ENCODE measurements at regions of chr16 and their contacts with region 1.

Region 1: DNA sequence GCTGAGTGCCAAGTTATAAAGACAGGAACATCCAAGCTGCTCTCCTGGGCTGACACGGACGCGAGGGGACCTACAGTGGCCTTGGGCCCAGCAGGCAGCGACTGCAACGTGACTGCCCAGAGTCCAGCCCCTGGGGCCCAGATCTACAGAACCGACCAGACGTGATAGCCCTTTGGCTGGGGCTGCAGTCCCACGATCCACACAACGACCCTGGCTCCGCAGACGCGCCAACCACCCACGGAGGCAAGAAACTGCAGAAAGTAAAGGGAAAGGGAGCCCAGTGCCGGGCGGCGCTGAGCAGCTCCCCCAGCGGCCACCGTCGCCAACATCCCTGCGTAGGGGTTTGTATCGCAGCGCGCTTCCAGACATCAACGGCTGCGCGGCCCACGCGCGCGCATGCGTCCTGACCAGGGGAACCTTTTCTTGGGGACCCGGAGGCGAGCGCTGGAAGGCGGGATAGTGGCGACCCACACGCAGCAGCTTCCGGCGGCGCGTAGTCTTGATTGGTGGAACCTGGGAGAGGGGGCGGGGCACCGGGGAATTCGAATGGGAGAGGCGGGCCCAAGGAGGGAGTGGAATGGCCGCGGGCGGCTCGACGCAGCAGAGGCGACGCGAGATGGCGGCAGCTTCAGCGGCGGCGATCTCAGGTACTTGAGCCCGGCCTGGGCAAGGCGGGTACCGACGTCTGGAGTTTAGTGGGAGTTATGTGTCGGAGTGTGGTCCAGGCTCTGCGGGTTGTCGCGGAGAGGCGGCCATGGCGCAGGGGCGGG is at the start of gene KIF22:
- DNase-seq: peak; percentile 99 to 100 (median 100)
- ATAC-seq: peak; percentile 95
- H3K4me3 ChIP-seq: peak within 1 kb of the TSS; percentile 81 to 94
- H3K4me3 Mint-ChIP-seq: peak within 1 kb of the TSS; percentile 99
- H3K27ac ChIP-seq: peak within 1 kb of the TSS; percentile 78 to 80
- H3K27ac Mint-ChIP-seq: peak within 1 kb of the TSS; percentile 95
- H3K4me1 ChIP-seq: peaks cover 30% of the 10 kb centered on the region
- H3K4me1 Mint-ChIP-seq: peaks cover 41% of the 10 kb centered on the region
- H3K27me3 ChIP-seq: no peaks in the 10 kb centered on the region
- H3K27me3 Mint-ChIP-seq: no peaks in the 10 kb centered on the region
- CTCF ChIP-seq: peak; percentile 67
- total RNA-seq, gene KIF22: 93.5 to 105 TPM

Region 2: GRCh38 chr16:29729116-29729521 is 61.2 kb before region 1 on chr16:
- CTCF ChIA-PET with region 1: interaction called, 13 read pairs
- POLR2A ChIA-PET with region 1: interaction called, 9 read pairs
- intact Hi-C with region 1: no loop called
- DNase-seq: peak in 1 of 9 experiments; percentile 39
- ATAC-seq: no peak
- H3K4me3 ChIP-seq: no peak overlapping the region
- H3K4me3 Mint-ChIP-seq: no peak overlapping the region
- H3K27ac ChIP-seq: no peak overlapping the region
- H3K27ac Mint-ChIP-seq: no peak overlapping the region
- H3K4me1 ChIP-seq: peaks cover 11% of the 10 kb centered on the region
- H3K4me1 Mint-ChIP-seq: peaks cover 23% of the 10 kb centered on the region
- H3K27me3 ChIP-seq: no peaks in the 10 kb centered on the region
- H3K27me3 Mint-ChIP-seq: no peaks in the 10 kb centered on the region
- CTCF ChIP-seq: peak; percentile 24

Region 3: DNA sequence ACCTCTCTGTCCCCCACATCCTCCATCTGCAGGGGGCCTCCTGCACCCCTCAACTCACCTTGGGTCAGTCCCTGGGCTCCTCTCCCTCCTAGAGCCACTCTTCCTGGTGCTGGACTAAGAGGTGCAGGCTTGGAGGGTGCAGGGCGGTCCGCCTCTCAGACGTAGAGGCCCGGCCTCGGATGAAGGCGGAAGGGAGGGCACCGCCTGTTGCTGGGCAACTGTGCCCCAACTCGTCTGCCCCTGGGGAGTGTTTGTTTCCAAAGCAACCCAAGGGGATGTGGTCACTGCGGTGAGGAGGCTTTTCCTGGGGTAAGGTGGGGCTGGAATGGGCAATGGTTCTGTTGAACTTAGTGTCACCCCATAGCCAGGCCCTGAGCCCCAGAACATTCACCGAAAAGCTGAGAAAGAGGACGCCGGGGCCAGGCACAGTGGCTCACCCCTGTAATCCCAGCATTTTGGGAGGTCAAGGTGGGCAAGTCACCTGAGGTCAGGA is 44.5 kb before region 1 on chr16 and contains the start of gene C16orf54:
- CTCF ChIA-PET with region 1: interaction called, 19 read pairs
- POLR2A ChIA-PET with region 1: interaction called, 31 read pairs
- intact Hi-C with region 1: loop called (anchors 1 kb)
- DNase-seq: peak; percentile 88 to 98 (median 95)
- ATAC-seq: peak; percentile 81
- H3K4me3 ChIP-seq: peak within 1 kb of the TSS; percentile 90 to 93
- H3K4me3 Mint-ChIP-seq: peak within 1 kb of the TSS; percentile 94
- H3K27ac ChIP-seq: peak within 1 kb of the TSS; percentile 96 to 98
- H3K27ac Mint-ChIP-seq: peak within 1 kb of the TSS; percentile 96
- H3K4me1 ChIP-seq: peaks cover 62% of the 10 kb centered on the region
- H3K4me1 Mint-ChIP-seq: peaks cover 69% of the 10 kb centered on the region
- H3K27me3 ChIP-seq: no peaks in the 10 kb centered on the region
- H3K27me3 Mint-ChIP-seq: no peaks in the 10 kb centered on the region
- CTCF ChIP-seq: no peak
- total RNA-seq, gene C16orf54: 129 to 132 TPM

Region 4: GRCh38 chr16:29815793-29816693 is 25.7 kb after region 1 on chr16 and contains the start of gene PAGR1:
- CTCF ChIA-PET with region 1: interaction called, 15 read pairs
- POLR2A ChIA-PET with region 1: interaction called, 22 read pairs
- intact Hi-C with region 1: loop called (anchors 1 kb)
- DNase-seq: peak; percentile 97 to 100 (median 98)
- ATAC-seq: peak; percentile 77
- H3K4me3 ChIP-seq: peak within 1 kb of the TSS; percentile 74 to 90
- H3K4me3 Mint-ChIP-seq: peak within 1 kb of the TSS; percentile 98
- H3K27ac ChIP-seq: peak within 1 kb of the TSS; percentile 80 to 86
- H3K27ac Mint-ChIP-seq: peak within 1 kb of the TSS; percentile 98
- H3K4me1 ChIP-seq: peaks cover 59% of the 10 kb centered on the region
- H3K4me1 Mint-ChIP-seq: peaks cover 62% of the 10 kb centered on the region
- H3K27me3 ChIP-seq: no peaks in the 10 kb centered on the region
- H3K27me3 Mint-ChIP-seq: no peaks in the 10 kb centered on the region
- CTCF ChIP-seq: peak; percentile 92
- total RNA-seq, gene PAGR1: 13.8 to 16.8 TPM

Region 5: DNA sequence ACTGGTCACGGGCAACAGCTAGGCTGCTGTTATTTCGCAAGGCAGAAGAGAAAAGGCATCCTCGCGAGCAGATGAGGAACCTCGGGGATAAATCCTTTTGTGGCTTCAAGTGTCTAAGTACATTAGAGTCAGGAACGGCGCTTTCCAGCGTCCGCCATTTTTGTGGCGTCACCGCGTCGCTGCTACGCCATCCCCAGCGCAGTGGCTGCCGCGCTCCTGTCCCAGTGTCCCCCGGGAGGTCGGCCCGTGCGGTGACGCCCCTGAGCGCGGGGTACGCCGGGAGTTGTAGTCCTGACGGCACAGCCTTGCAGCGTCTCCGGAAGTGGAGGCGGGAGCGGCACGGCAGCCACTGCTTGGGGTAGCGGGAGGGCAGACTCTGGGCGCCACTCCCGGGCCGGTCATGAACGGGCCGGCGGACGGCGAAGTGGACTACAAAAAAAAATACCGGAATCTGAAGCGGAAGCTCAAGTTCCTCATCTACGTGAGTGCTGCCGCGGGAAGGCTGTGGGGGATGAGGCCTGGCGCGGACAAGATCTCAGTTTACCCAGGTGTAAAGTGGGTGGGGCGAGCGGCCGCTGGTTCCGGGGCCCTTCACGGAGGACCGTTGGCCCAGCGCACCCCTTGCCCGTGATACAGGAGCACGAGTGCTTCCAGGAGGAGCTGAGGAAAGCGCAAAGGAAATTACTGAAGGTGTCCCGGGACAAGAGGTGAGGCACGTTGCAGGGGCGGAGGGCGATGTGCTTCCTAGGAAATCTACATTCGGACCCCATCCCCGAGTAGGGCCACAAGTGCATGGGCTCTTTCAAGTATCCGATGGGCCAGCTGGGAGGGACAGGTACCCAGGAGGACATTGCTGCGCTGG is 205.8 kb after region 1 on chr16 and contains the start of gene INO80E:
- CTCF ChIA-PET with region 1: no interaction called
- POLR2A ChIA-PET with region 1: interaction called, 4 read pairs
- intact Hi-C with region 1: loop called (anchors 1 kb)
- DNase-seq: peak; percentile 98 to 100 (median 99)
- ATAC-seq: peak; percentile 96
- H3K4me3 ChIP-seq: peak within 1 kb of the TSS; percentile 93 to 100
- H3K4me3 Mint-ChIP-seq: peak within 1 kb of the TSS; percentile 94
- H3K27ac ChIP-seq: peak within 1 kb of the TSS; percentile 99
- H3K27ac Mint-ChIP-seq: peak within 1 kb of the TSS; percentile 97
- H3K4me1 ChIP-seq: peaks cover 14% of the 10 kb centered on the region
- H3K4me1 Mint-ChIP-seq: peaks cover 39% of the 10 kb centered on the region
- H3K27me3 ChIP-seq: no peaks in the 10 kb centered on the region
- H3K27me3 Mint-ChIP-seq: no peaks in the 10 kb centered on the region
- CTCF ChIP-seq: no peak
- total RNA-seq, gene INO80E: 49.8 to 59.4 TPM

Region 6: GRCh38 chr16:30173054-30173453 is 382.7 kb after region 1 on chr16:
- CTCF ChIA-PET with region 1: no interaction called
- POLR2A ChIA-PET with region 1: no interaction called
- intact Hi-C with region 1: no loop called
- DNase-seq: no peak
- ATAC-seq: no peak
- H3K4me3 ChIP-seq: no peak overlapping the region
- H3K4me3 Mint-ChIP-seq: no peak overlapping the region
- H3K27ac ChIP-seq: no peak overlapping the region
- H3K27ac Mint-ChIP-seq: no peak overlapping the region
- H3K4me1 ChIP-seq: no peaks in the 10 kb centered on the region
- H3K4me1 Mint-ChIP-seq: peaks cover 2% of the 10 kb centered on the region
- H3K27me3 ChIP-seq: no peaks in the 10 kb centered on the region
- H3K27me3 Mint-ChIP-seq: no peaks in the 10 kb centered on the region
- CTCF ChIP-seq: no peak